Activated CD4-positive, alpha-beta T cell treated with anti-CD3 and anti-CD28 coated beads, Interleukin-2, amount 10 ng/mL, durations not matched to agents 24 days and 14 days (primary cell): ENCODE measurements at regions of chr14 and their contacts with region 1.

Region 1: GRCh38 chr14:23095196-23096108 is at the start of gene C14orf119:
- DNase-seq: peak; percentile 100
- H3K4me3 Mint-ChIP-seq: no peak within 1 kb of the TSS
- H3K27ac Mint-ChIP-seq: no peak within 1 kb of the TSS
- H3K4me1 Mint-ChIP-seq: peaks cover 29% of the 10 kb centered on the region
- H3K27me3 Mint-ChIP-seq: no peaks in the 10 kb centered on the region
- total RNA-seq, gene C14orf119: 50.9 and 54.3 TPM in 2 replicates

Region 2: GRCh38 chr14:23034483-23035302 is 60.8 kb before region 1 on chr14 and contains the start of gene PSMB5:
- intact Hi-C with region 1: loop called (anchors 1 kb)
- DNase-seq: peak; percentile 96
- H3K4me3 Mint-ChIP-seq: peak within 1 kb of the TSS; percentile 81
- H3K27ac Mint-ChIP-seq: peak within 1 kb of the TSS; percentile 88
- H3K4me1 Mint-ChIP-seq: peaks cover 24% of the 10 kb centered on the region
- H3K27me3 Mint-ChIP-seq: no peaks in the 10 kb centered on the region
- total RNA-seq, gene PSMB5: 150 TPM in 2 replicates

Region 3: GRCh38 chr14:23120541-23121251 is 25.2 kb after region 1 on chr14:
- intact Hi-C with region 1: no loop called
- DNase-seq: peak; percentile 94
- H3K4me3 Mint-ChIP-seq: peak overlapping the region; percentile 16
- H3K27ac Mint-ChIP-seq: peak overlapping the region; percentile 81
- H3K4me1 Mint-ChIP-seq: peaks cover 28% of the 10 kb centered on the region
- H3K27me3 Mint-ChIP-seq: peaks cover 4% of the 10 kb centered on the region

Region 4: DNA sequence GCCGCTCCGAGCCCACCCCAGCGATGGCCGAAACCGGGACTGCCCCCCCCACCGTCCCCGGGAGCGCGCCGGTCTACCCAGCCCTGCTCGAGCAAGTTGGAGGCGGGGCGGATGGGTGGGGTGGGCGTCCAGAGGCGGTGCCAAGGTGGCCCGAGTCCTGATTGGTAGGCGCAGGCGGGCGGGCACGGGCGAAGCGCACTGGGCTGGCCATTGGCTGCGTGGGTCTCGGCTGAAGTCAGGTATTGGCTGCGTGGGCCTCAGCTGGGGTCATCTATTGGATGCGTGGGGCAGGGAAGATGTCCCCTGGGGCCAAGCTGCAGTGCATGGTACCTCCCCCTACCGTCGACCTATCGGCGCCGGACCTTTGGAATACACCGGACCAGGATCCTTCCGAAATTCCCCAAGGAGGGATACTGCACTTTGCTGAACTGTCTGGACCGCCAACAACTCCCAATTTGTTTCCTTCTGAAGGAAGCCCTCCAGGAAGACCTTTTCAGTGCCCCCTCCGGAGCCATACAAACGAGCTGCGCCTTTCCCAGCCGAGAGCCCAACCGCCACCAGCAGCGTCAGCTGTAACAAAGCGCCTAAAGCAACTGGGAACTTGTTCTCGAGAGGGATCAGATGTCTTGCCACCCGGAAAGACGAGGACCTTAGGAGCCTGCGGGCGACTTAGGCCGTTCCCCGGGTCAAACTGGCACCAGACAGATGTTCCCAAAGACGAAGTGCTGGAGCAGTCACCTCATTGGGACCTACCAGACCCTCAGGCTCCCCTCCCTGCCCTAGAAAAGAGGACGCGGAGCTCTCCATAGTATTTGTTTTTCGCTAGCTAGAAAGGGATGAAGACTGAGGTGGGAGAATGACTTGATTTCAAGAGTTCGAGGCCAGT is 190.8 kb after region 1 on chr14 and contains the start of gene HOMEZ:
- intact Hi-C with region 1: loop called (anchors 5 kb)
- DNase-seq: peak; percentile 99
- H3K4me3 Mint-ChIP-seq: peak within 1 kb of the TSS; percentile 99
- H3K27ac Mint-ChIP-seq: peak within 1 kb of the TSS; percentile 94
- H3K4me1 Mint-ChIP-seq: peaks cover 20% of the 10 kb centered on the region
- H3K27me3 Mint-ChIP-seq: no peaks in the 10 kb centered on the region
- total RNA-seq, gene HOMEZ: 12.9 and 13.5 TPM in 2 replicates

Region 5: DNA sequence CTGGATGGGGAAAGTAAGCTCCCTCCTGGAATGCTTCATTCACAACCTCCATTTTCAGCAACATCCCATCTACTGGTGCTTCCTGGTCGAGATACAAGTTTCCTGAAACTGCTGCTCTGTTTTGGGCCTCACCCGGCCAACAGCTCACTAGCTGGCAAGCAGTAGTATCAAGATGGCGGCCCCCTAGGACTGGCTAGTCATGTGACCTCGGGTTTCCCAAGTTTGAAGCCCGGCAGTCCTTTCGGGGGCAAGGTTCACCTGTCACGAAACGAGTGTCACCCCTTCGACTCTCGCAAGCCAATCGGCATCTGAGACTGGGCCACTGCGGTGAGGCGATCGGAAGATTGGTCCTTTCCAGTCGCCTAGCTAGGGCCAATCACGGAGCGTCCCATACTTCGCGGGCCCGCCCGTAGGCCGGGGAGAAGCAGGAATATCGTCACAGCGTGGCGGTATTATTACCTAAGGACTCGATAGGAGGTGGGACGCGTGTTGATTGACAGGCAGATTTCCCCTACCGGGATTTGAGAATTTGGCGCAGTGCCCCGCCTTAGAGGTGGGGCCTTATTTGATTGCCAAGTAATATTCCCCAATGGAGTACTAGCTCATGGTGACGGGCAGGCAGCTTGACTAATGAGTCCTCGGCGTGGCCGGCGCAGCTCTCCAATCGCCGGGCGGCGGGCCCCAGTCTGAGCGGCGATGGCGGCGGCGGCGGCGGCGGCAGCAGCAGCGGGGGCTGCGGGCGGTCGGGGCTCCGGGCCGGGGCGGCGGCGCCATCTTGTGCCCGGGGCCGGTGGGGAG is 225.5 kb after region 1 on chr14 and contains the start of gene PABPN1:
- intact Hi-C with region 1: loop called (anchors 2 kb)
- DNase-seq: peak; percentile 99
- H3K4me3 Mint-ChIP-seq: peak within 1 kb of the TSS; percentile 90
- H3K27ac Mint-ChIP-seq: peak within 1 kb of the TSS; percentile 98
- H3K4me1 Mint-ChIP-seq: peaks cover 24% of the 10 kb centered on the region
- H3K27me3 Mint-ChIP-seq: no peaks in the 10 kb centered on the region
- total RNA-seq, gene PABPN1: 277 and 278 TPM in 2 replicates